ENCODE measurements at regions of chr1 and their contacts with region 1.

Region 1: GRCh38 chr1:98001764-98002163 is 80.9 kb upstream of the DPYD start:
- DNase-seq: no peak
- ATAC-seq: no peak
- H3K4me3 ChIP-seq: no peak overlapping the region
- H3K27ac ChIP-seq: no peak overlapping the region
- H3K4me1 ChIP-seq: no peaks in the 10 kb centered on the region
- H3K27me3 ChIP-seq: no peaks in the 10 kb centered on the region
- CTCF ChIP-seq: no peak
- EP300 ChIP-seq: no peak
- POLR2A ChIP-seq: no peak
- RAD21 ChIP-seq: no peak

Region 2: GRCh38 chr1:97960470-97960869 is 41.3 kb before region 1 on chr1:
- CTCF ChIA-PET with region 1: no interaction called
- POLR2A ChIA-PET with region 1: no interaction called
- RAD21 ChIA-PET with region 1: no interaction called
- SMC1A ChIA-PET with region 1: no interaction called
- in situ Hi-C with region 1: no loop called
- intact Hi-C with region 1: no loop called
- DNase-seq: no peak
- ATAC-seq: no peak
- H3K4me3 ChIP-seq: no peak overlapping the region
- H3K27ac ChIP-seq: no peak overlapping the region
- H3K4me1 ChIP-seq: no peaks in the 10 kb centered on the region
- H3K27me3 ChIP-seq: no peaks in the 10 kb centered on the region
- CTCF ChIP-seq: no peak
- EP300 ChIP-seq: no peak
- POLR2A ChIP-seq: no peak
- RAD21 ChIP-seq: no peak

Region 3: GRCh38 chr1:98018074-98018473 is 16.3 kb after region 1 on chr1:
- CTCF ChIA-PET with region 1: interaction called, 7 read pairs
- POLR2A ChIA-PET with region 1: interaction called, 3 read pairs
- RAD21 ChIA-PET with region 1: interaction called, 3 read pairs
- SMC1A ChIA-PET with region 1: interaction called, 33 read pairs
- in situ Hi-C with region 1: no loop called
- intact Hi-C with region 1: no loop called
- DNase-seq: no peak
- ATAC-seq: peak; percentile 78
- H3K4me3 ChIP-seq: no peak overlapping the region
- H3K27ac ChIP-seq: no peak overlapping the region
- H3K4me1 ChIP-seq: no peaks in the 10 kb centered on the region
- H3K27me3 ChIP-seq: no peaks in the 10 kb centered on the region
- CTCF ChIP-seq: no peak
- EP300 ChIP-seq: no peak
- POLR2A ChIP-seq: no peak
- RAD21 ChIP-seq: no peak

Region 4: DNA sequence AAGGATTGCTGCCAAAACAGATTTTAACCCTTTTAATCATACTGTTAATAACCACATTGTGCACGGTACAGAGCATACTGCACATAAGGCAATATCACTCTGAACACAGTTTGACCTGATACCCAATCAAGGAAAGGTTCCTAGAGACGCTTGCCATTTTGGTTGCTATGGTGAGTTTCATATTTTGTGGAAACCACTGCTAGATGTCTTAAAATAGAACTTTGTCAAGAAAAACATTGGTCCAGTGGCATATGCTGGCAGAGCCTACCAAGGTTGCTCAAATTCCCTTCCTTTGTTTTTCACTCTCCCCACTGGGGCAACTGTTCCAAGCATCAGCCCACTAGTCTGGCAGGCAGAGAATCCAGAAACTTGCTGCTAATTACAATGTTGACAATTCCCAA is 33.8 kb after region 1 on chr1:
- CTCF ChIA-PET with region 1: no interaction called
- POLR2A ChIA-PET with region 1: no interaction called
- RAD21 ChIA-PET with region 1: no interaction called
- SMC1A ChIA-PET with region 1: interaction called, 3 read pairs
- in situ Hi-C with region 1: no loop called
- intact Hi-C with region 1: loop called (anchors 5 kb)
- DNase-seq: no peak
- ATAC-seq: no peak
- H3K4me3 ChIP-seq: no peak overlapping the region
- H3K27ac ChIP-seq: no peak overlapping the region
- H3K4me1 ChIP-seq: no peaks in the 10 kb centered on the region
- H3K27me3 ChIP-seq: no peaks in the 10 kb centered on the region
- CTCF ChIP-seq: no peak
- EP300 ChIP-seq: no peak
- POLR2A ChIP-seq: no peak
- RAD21 ChIP-seq: no peak